ENCODE measurements at regions of chr17 and their contacts with region 1.

Region 1: DNA sequence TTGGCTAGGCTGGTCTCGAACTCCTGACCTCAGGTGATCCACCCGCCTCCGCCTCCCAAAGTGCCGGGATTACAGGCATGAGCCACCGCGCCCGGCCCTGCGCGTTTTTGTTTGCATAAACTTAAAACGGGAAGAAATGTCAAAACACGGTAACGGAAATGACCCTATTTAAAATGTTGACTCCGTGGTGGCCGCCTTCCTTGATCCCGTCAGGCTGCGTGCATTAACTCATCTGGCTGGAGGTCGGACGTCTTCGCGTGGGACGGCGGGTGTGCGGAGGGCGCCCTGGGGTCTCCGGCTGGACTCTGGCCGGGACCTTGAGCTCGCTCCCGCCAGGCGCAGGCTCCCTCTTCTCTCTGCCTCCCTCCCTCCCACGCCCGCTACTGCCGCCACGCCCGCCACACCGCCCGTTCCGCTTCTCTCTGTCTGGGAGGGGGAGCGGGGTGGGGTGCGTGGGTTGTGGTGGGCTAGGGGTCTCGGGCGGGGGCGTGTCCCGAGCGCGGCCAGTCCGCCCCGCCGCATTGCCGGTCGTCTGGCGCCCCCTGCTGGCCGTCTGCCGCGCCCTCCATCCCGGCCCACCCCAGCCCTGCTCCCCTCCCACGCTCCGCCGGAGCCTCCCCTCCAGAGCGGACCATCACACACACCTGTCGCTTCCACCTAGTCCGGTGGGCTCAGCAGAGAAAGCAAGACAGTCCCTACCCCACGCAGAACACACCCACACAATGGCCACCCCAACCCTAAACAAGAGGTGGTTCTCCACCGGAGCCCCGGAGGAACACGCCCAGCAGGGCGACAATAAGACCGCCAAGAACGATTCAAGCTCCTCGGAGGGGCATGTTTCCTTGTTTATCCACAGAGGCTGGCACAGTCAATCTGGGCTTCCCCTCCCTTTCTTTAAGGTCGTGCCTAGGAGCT is 1.2 kb upstream of the CCDC42 start:
- DNase-seq: peak; percentile 87
- ATAC-seq: peak; percentile 83
- H3K4me3 Mint-ChIP-seq: peak overlapping the region; percentile 77
- H3K27ac Mint-ChIP-seq: peak overlapping the region; percentile 79
- H3K4me1 Mint-ChIP-seq: peaks cover 3% of the 10 kb centered on the region
- H3K27me3 Mint-ChIP-seq: no peaks in the 10 kb centered on the region

Region 2: DNA sequence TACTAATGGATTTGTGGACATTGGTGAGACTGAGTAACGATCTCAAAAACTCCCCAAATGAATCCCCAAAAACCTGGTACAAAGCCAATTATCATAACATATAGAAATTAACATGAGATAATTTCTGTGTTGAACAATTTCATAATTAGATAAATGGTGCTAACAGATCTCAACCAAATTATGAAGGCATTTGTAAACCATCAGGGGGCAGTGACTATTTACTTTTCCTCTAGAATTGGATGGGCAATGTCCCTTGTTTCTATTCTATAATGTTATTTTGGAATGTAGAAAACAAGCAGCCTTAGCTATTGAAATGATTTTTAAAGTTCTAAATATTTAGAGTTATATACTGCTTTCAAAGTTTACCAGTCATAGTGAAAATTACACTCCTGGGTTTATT is 173.1 kb before region 1 on chr17:
- CTCF ChIA-PET with region 1: interaction called, 4 read pairs
- POLR2A ChIA-PET with region 1: no interaction called
- intact Hi-C with region 1: loop called (anchors 2 kb)
- DNase-seq: no peak
- ATAC-seq: no peak
- H3K4me3 Mint-ChIP-seq: no peak overlapping the region
- H3K27ac Mint-ChIP-seq: no peak overlapping the region
- H3K4me1 Mint-ChIP-seq: no peaks in the 10 kb centered on the region
- H3K27me3 Mint-ChIP-seq: no peaks in the 10 kb centered on the region

Region 3: DNA sequence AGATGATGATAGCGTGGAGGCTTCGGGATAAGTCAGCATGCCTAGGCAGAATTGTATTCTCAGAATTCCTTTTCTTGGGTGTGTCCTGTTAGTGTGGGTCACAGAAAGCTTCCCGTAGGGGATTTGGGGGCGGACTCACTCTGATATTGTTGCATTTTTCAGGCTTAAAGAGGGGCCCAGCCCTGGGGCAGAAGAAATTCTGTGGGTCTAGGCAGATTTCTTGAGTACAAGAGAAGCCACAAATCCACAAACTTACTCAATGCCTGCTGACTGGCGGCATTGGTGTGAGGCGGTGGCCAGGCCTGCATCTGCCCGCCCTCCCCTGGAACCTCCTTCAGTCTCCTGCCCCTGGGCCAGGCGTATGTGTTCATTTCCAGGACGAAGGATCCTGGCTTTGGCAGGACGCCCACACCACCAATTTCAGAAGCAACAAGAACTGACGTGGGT is 18.8 kb before region 1 on chr17:
- CTCF ChIA-PET with region 1: no interaction called
- POLR2A ChIA-PET with region 1: no interaction called
- intact Hi-C with region 1: no loop called
- DNase-seq: no peak
- ATAC-seq: no peak
- H3K4me3 Mint-ChIP-seq: no peak overlapping the region
- H3K27ac Mint-ChIP-seq: no peak overlapping the region
- H3K4me1 Mint-ChIP-seq: no peaks in the 10 kb centered on the region
- H3K27me3 Mint-ChIP-seq: peaks cover 11% of the 10 kb centered on the region